GM12878 (cell line): ENCODE measurements at regions of chr9 and their contacts with region 1.

Region 1: DNA sequence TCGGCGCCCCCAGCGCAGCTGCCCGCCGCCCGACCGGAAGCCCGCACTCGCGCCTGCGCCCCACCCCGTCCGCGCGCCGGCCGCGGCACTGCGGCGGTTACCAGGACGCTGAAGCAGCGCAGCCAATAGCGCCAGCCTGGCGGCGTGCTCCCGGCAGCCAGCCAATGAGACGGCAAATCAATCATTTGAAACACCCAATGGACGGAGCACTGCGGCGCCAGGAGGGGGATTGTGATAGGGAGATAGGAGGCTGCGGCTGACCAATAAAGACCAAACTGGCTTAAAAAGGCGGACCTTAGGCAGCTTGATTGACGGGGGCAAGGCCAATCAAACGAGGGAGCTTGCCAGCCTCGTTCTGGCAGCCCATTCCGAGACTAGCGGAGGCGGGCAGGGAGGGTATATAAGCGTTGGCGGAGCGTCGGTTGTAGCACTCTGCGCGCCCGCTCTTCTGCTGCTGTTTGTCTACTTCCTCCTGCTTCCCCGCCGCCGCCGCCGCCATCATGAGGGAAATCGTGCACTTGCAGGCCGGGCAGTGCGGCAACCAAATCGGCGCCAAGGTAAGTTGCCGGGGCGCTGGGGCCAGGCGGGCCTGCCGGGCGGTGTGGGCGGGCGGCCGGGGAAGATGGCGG is at the start of gene TUBB4B:
- DNase-seq: peak; percentile 100
- ATAC-seq: peak; percentile 86
- H3K4me3 ChIP-seq: peak within 1 kb of the TSS; percentile 98
- H3K27ac ChIP-seq: peak within 1 kb of the TSS; percentile 83
- H3K4me1 ChIP-seq: peaks cover 42% of the 10 kb centered on the region
- H3K27me3 ChIP-seq: no peaks in the 10 kb centered on the region
- CTCF ChIP-seq: no peak
- EP300 ChIP-seq: peak in 1 of 2 experiments; percentile 39; a peak in 2 of 4 replicates
- POLR2A ChIP-seq: no peak
- RAD21 ChIP-seq: no peak
- polyA plus RNA-seq, gene TUBB4B: 23.0 to 63.2 TPM

Region 2: GRCh38 chr9:136820971-136821825 is 419.8 kb before region 1 on chr9:
- CTCF ChIA-PET with region 1: no interaction called
- POLR2A ChIA-PET with region 1: no interaction called
- RAD21 ChIA-PET with region 1: no interaction called
- SMC1A ChIA-PET with region 1: no interaction called
- in situ Hi-C with region 1: no loop called
- intact Hi-C with region 1: no loop called
- DNase-seq: no peak
- ATAC-seq: no peak
- H3K4me3 ChIP-seq: no peak overlapping the region
- H3K27ac ChIP-seq: no peak overlapping the region
- H3K4me1 ChIP-seq: no peaks in the 10 kb centered on the region
- H3K27me3 ChIP-seq: no peaks in the 10 kb centered on the region
- CTCF ChIP-seq: no peak
- EP300 ChIP-seq: no peak
- POLR2A ChIP-seq: no peak
- RAD21 ChIP-seq: no peak

Region 3: DNA sequence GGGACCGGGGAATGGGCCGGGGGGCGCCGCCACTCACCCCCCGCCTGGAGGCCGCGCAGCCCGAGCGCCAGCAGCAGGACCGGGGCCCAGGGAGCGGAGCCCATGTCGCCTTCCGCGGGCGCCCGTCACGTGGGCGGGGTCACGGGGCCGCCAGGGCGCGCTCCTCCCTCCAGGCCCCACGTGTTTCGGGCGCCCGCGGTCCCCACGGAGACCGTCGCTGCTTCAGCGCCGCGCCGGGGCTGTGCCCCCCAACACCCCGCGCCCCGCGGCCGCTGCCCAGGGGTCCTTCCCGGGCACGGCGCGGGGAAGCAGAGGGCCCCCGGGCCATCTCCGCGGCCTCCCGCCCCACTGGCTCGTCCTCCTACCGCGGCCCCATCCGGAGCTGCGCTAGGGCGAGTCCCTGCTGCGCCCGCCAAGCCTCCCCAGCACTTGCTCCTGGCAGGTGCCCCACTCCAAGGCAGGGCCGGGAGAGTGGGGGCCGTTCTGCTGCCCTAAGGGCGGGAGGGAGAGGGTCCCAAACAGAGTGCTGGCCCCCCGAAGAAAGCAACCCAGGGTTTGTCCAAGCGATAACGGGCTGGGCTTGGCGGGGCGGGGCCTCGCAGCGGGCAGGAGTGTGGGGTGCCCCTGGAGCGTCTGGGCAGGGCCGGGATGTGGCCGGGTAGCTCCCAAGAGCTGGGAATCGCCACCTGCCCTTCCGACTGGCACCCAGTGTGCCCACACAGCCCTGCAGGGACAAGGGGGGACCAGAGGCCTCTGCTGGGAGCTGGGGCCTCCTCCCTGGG is 126.2 kb before region 1 on chr9 and contains the start of gene DPP7:
- CTCF ChIA-PET with region 1: interaction called, 12 read pairs
- POLR2A ChIA-PET with region 1: interaction called, 3 read pairs
- RAD21 ChIA-PET with region 1: interaction called, 6 read pairs
- SMC1A ChIA-PET with region 1: no interaction called
- in situ Hi-C with region 1: no loop called
- intact Hi-C with region 1: no loop called
- DNase-seq: no peak
- ATAC-seq: peak; percentile 97
- H3K4me3 ChIP-seq: peak within 1 kb of the TSS; percentile 70
- H3K27ac ChIP-seq: peak within 1 kb of the TSS; percentile 58; the same call in 1 of the 2 replicates
- H3K4me1 ChIP-seq: peaks cover 6% of the 10 kb centered on the region; the same call in 1 of the 2 replicates
- H3K27me3 ChIP-seq: no peaks in the 10 kb centered on the region
- CTCF ChIP-seq: no peak
- EP300 ChIP-seq: no peak
- POLR2A ChIP-seq: peak; percentile 87
- RAD21 ChIP-seq: no peak
- polyA plus RNA-seq, gene DPP7: 0.68 to 10.0 TPM

Region 4: DNA sequence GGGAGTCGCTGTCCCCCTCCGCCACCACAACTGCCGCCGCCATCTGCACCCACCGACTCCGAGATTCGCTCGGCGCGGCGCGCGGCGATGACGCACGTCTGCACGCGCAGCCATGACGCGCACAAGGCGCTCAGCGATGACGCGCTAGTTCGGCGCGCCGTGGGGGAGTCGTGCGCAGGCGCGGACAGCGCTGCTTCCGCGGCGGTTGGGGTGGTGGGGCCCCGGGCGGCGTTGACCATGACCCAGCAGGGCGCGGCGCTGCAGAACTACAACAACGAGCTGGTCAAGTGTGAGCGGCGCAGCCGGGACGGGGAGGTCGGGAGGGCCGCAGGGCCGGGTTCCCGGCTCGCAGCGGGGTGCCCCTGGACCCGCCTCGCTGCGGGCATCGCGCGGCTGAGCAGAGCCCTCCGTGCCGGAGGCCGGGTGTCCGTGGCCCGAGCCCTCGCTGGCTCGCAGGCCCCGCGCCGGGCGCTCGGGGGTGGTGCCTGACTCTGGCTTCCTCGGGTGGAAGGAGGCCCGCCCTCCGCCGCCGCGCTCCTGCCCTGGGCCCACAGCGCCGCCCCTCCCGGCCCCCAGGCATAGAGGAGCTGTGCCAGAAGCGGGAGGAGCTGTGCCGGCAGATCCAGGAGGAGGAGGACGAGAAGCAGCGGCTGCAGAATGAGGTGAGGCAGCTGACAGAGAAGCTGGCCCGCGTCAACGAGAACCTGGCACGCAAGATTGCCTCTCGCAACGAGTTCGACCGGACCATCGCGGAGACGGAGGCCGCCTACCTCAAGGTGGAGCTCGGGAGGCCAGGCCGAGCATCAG is 52.3 kb before region 1 on chr9 and contains the starts of genes ANAPC2 and SSNA1:
- CTCF ChIA-PET with region 1: interaction called, 9 read pairs
- POLR2A ChIA-PET with region 1: interaction called, 7 read pairs
- RAD21 ChIA-PET with region 1: interaction called, 20 read pairs
- SMC1A ChIA-PET with region 1: interaction called, 3 read pairs
- in situ Hi-C with region 1: no loop called
- intact Hi-C with region 1: no loop called
- DNase-seq: peak; percentile 82
- ATAC-seq: peak; percentile 92
- H3K4me3 ChIP-seq: peak within 1 kb of the TSS; percentile 99
- H3K27ac ChIP-seq: peak within 1 kb of the TSS; percentile 77
- H3K4me1 ChIP-seq: peaks cover 22% of the 10 kb centered on the region
- H3K27me3 ChIP-seq: no peaks in the 10 kb centered on the region
- CTCF ChIP-seq: peak; percentile 41 to 58 (median 52)
- EP300 ChIP-seq: peak; percentile 14 to 49; a peak in 1 of 4 replicates
- POLR2A ChIP-seq: peak; percentile 95
- RAD21 ChIP-seq: peak; percentile 45
- polyA plus RNA-seq, gene ANAPC2: 0.03 to 0.04 TPM
- polyA plus RNA-seq, gene SSNA1: 0.63 to 13.4 TPM

Region 5: DNA sequence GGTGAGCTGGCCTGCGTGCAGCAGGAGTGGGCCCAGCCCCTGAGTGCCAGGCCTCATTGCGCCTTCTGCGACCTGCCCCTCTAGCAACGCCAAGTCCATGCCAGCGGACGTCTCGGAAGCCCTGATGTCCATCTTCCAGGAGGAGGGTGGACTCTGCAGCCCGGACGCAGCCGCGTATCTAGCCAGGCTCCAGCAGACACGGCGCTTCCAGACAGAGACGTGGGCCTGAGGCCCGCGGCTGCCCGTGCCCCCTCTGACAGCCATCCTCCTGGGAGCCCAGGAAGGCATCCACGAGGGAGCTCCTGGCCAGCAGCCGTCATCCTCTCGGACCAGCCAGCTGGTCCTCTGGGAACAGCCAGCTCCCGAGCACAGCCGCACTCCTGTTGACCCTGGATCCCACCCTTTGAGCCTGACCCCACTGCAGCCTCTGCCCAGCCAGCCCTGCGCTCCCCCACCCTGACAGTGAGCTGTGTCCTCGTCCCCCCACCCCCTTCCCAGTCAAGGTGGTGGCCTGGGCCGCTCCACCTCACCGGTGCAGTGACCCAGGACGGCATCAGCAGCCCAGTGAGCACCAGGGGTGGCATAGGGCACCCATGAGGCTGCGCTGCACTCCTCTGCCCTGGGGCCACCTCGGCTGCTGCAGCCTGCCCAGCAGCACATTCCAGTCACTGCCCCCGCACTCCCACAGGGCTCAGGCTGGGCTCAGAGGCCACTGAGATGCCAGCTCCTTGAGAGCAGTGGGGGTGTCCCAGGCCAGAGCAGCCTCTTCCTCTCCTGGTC is 24.6 kb before region 1 on chr9:
- CTCF ChIA-PET with region 1: no interaction called
- POLR2A ChIA-PET with region 1: no interaction called
- RAD21 ChIA-PET with region 1: no interaction called
- SMC1A ChIA-PET with region 1: no interaction called
- in situ Hi-C with region 1: no loop called
- intact Hi-C with region 1: no loop called
- DNase-seq: no peak
- ATAC-seq: no peak
- H3K4me3 ChIP-seq: no peak overlapping the region
- H3K27ac ChIP-seq: no peak overlapping the region
- H3K4me1 ChIP-seq: no peaks in the 10 kb centered on the region
- H3K27me3 ChIP-seq: no peaks in the 10 kb centered on the region
- CTCF ChIP-seq: no peak
- EP300 ChIP-seq: no peak
- POLR2A ChIP-seq: 0 out of 2 replicates have a peak, but pooled peaks have one; percentile 3
- RAD21 ChIP-seq: no peak

Region 6: GRCh38 chr9:137254624-137255447 is 13.9 kb after region 1 on chr9 and contains the start of gene NELFB:
- CTCF ChIA-PET with region 1: interaction called, 7 read pairs
- POLR2A ChIA-PET with region 1: interaction called, 112 read pairs
- RAD21 ChIA-PET with region 1: interaction called, 13 read pairs
- SMC1A ChIA-PET with region 1: interaction called, 5 read pairs
- in situ Hi-C with region 1: no loop called
- intact Hi-C with region 1: no loop called
- DNase-seq: peak; percentile 46
- ATAC-seq: peak; percentile 83
- H3K4me3 ChIP-seq: peak within 1 kb of the TSS; percentile 93
- H3K27ac ChIP-seq: peak within 1 kb of the TSS; percentile 77
- H3K4me1 ChIP-seq: peaks cover 14% of the 10 kb centered on the region
- H3K27me3 ChIP-seq: no peaks in the 10 kb centered on the region
- CTCF ChIP-seq: no peak; a peak in 1 of 6 replicates
- EP300 ChIP-seq: no peak
- POLR2A ChIP-seq: peak; percentile 78
- RAD21 ChIP-seq: no peak
- polyA plus RNA-seq, gene NELFB: 0.19 to 0.68 TPM

Region 7: DNA sequence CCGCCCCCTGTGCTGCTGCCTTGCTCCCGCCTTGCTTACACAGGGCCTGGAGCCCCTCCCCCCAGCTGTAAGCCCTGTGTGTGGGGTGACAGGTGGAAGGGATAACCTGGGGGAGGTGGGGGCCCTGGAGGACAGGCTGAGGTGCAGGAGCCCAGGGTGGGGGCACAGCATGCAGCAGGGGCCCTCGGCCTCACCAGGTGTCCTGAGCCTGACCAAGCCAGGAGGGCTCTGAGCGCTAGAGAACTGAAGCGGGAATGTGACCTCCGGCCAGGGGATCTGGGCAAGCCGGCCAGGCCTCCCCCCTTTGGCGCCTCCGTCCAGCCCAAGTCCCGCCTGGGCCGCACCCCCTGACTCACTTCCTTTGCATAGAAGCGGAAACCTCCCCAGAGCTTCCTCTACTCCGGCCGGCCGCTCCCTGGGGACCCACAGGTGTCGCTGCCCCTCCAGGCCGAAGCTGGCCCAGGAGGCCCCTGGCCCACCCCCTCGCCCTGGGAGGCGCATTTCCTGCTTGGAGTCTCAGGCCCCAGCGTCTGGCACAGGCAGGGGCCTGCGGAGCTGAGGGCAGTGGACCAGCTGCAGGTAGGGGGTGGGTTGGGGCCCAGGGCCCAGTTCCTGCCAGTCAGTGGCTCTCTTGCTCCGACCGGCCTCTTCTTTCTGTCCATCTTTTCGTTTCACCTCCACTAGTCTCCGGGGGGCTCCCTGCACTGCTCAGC is 36.5 kb after region 1 on chr9 and contains the start of gene TOR4A:
- CTCF ChIA-PET with region 1: interaction called, 14 read pairs
- POLR2A ChIA-PET with region 1: interaction called, 14 read pairs
- RAD21 ChIA-PET with region 1: interaction called, 14 read pairs
- SMC1A ChIA-PET with region 1: interaction called, 6 read pairs
- in situ Hi-C with region 1: no loop called
- intact Hi-C with region 1: no loop called
- DNase-seq: peak; percentile 42
- ATAC-seq: peak; percentile 89
- H3K4me3 ChIP-seq: peak within 1 kb of the TSS; percentile 92
- H3K27ac ChIP-seq: peak within 1 kb of the TSS; percentile 95
- H3K4me1 ChIP-seq: peaks cover 39% of the 10 kb centered on the region
- H3K27me3 ChIP-seq: no peaks in the 10 kb centered on the region
- CTCF ChIP-seq: peak; percentile 26 to 34 (median 28); a peak in 4 of 6 replicates
- EP300 ChIP-seq: no peak
- POLR2A ChIP-seq: no peak
- RAD21 ChIP-seq: 0 out of 2 replicates have a peak, but pooled peaks have one; percentile 1
- polyA plus RNA-seq, gene TOR4A: 2.2 to 3.4 TPM